Cardiac septum (tissue), 1 donor: ENCODE measurements at regions of chr1 and their contacts with region 1.

Region 1: GRCh38 chr1:182677397-182678098 is 6.8 kb downstream of the RGS8 start:
- DNase-seq: no peak

Region 2: GRCh38 chr1:182614796-182615454 is 62.6 kb before region 1 on chr1:
- intact Hi-C with region 1: loop called (anchors 5 kb)
- DNase-seq: peak; percentile 94